ENCODE measurements at regions of chr1 and their contacts with region 1.

Region 1: GRCh38 chr1:184036517-184036949 is 995 bp downstream of the COLGALT2 start:
- DNase-seq: peak in 3 of 5 donors; percentile 14 to 18 (median 18)
- H3K4me3 ChIP-seq: peak overlapping the region in 1 of 2 donors; percentile 41
- H3K4me3 Mint-ChIP-seq: peak overlapping the region; percentile 76 to 85 (median 78)
- H3K27ac ChIP-seq: no peak overlapping the region
- H3K27ac Mint-ChIP-seq: peak overlapping the region in 1 of 7 donors; percentile 2
- H3K4me1 ChIP-seq: peaks cover 18% of the 10 kb centered on the region
- H3K4me1 Mint-ChIP-seq: peaks cover 15 to 22% (median 20%) of the 10 kb centered on the region in 4 donors
- H3K27me3 ChIP-seq: peaks cover 10% of the 10 kb centered on the region
- H3K27me3 Mint-ChIP-seq: peaks cover 33 to 41% of the 10 kb centered on the region in 2 donors

Region 2: DNA sequence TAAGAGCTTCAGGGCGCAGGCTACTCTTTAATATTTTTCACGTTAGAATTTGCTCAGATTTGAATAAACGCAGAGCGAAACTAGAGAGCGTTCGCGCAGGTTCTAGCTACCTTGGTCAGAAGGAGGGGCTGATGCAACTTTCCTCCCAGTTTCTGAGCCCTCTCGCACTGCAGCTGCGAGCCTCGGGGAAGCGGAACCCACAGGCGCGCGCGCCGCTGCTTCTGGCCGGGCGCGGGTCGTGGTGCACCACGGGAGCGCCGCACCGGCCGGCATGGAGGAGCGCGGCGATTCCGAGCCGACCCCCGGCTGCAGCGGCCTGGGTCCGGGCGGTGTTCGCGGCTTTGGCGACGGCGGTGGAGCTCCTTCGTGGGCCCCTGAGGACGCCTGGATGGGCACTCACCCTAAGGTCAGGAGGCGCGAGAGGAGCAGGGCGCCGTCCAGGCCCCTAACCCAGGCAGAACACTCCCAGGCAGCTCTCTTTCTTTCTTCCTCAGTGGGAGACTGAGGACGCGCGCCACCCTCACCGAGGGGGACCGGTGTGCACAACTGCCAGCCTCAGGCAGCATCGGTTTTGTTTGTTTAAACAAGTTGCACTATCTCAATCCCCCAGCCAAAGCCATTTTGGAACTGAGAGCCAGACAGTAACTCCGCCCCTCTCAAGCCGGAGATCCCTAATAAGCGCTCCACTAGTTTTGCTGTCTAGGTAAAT is 15.1 kb after region 1 on chr1 and contains the start of gene TSEN15:
- CTCF ChIA-PET with region 1: interaction called, 5 read pairs
- POLR2A ChIA-PET with region 1: interaction called, 16 read pairs
- intact Hi-C with region 1: loop called (anchors 2 kb)
- DNase-seq: peak; percentile 66 to 74 (median 72)
- H3K4me3 ChIP-seq: peak within 1 kb of the TSS; percentile 88 to 95
- H3K4me3 Mint-ChIP-seq: peak within 1 kb of the TSS; percentile 98 to 99 (median 99)
- H3K27ac ChIP-seq: peak within 1 kb of the TSS; percentile 67
- H3K27ac Mint-ChIP-seq: peak within 1 kb of the TSS; percentile 89 to 98 (median 96)
- H3K4me1 ChIP-seq: peaks cover 33% of the 10 kb centered on the region
- H3K4me1 Mint-ChIP-seq: peaks cover 26 to 47% (median 37%) of the 10 kb centered on the region in 4 donors
- H3K27me3 ChIP-seq: no peaks in the 10 kb centered on the region
- H3K27me3 Mint-ChIP-seq: peaks cover 0 to 5% of the 10 kb centered on the region in 2 donors
- total RNA-seq, gene TSEN15: 34.0 to 42.2 TPM

Region 3: DNA sequence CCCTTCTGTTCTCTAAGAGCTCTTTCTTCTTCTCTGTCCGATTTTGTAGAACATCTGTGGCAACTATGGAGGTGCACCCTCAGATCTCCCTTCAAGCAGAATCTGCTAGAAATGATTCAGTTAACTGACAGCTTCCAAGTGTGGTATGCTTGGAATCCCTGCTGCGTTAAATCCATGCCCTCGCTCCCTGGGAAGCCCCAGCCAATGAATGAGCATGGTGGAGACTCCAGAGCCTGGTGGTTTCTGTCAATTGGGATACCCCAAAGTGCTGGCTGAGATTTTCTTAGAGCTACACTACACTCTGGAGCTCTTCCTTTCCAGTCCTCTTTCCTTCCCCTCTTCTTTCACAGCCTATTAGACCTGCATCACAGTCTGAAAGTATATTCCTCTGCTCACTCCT is 234.0 kb after region 1 on chr1:
- CTCF ChIA-PET with region 1: no interaction called
- POLR2A ChIA-PET with region 1: no interaction called
- intact Hi-C with region 1: no loop called
- DNase-seq: no peak
- H3K4me3 ChIP-seq: no peak overlapping the region
- H3K4me3 Mint-ChIP-seq: no peak overlapping the region
- H3K27ac ChIP-seq: no peak overlapping the region
- H3K27ac Mint-ChIP-seq: no peak overlapping the region
- H3K4me1 ChIP-seq: no peaks in the 10 kb centered on the region
- H3K4me1 Mint-ChIP-seq: no peaks in the 10 kb centered on the region
- H3K27me3 ChIP-seq: no peaks in the 10 kb centered on the region
- H3K27me3 Mint-ChIP-seq: peaks cover 12 to 22% of the 10 kb centered on the region in 2 donors

Region 4: GRCh38 chr1:184590163-184590750 is 553.7 kb after region 1 on chr1:
- CTCF ChIA-PET with region 1: no interaction called
- POLR2A ChIA-PET with region 1: no interaction called
- intact Hi-C with region 1: no loop called
- DNase-seq: no peak
- H3K4me3 ChIP-seq: no peak overlapping the region
- H3K4me3 Mint-ChIP-seq: no peak overlapping the region
- H3K27ac ChIP-seq: no peak overlapping the region
- H3K27ac Mint-ChIP-seq: no peak overlapping the region
- H3K4me1 ChIP-seq: no peaks in the 10 kb centered on the region
- H3K4me1 Mint-ChIP-seq: no peaks in the 10 kb centered on the region
- H3K27me3 ChIP-seq: no peaks in the 10 kb centered on the region
- H3K27me3 Mint-ChIP-seq: peaks cover 8 to 13% of the 10 kb centered on the region in 2 donors